Endothelial cell of umbilical vein (primary cell): ENCODE measurements at regions of chr1 and their contacts with region 1.

Region 1: GRCh38 chr1:234610348-234611152 is 572 bp upstream of the IRF2BP2 start:
- DNase-seq: peak; percentile 95
- H3K4me3 ChIP-seq: peak overlapping the region; percentile 17 to 78 (median 57)
- H3K27ac ChIP-seq: peak overlapping the region; percentile 99
- H3K4me1 ChIP-seq: peaks cover 37% of the 10 kb centered on the region
- H3K27me3 ChIP-seq: no peaks in the 10 kb centered on the region
- CTCF ChIP-seq: peak in 1 of 2 donors; percentile 14
- POLR2A ChIP-seq: peak; percentile 10

Region 2: DNA sequence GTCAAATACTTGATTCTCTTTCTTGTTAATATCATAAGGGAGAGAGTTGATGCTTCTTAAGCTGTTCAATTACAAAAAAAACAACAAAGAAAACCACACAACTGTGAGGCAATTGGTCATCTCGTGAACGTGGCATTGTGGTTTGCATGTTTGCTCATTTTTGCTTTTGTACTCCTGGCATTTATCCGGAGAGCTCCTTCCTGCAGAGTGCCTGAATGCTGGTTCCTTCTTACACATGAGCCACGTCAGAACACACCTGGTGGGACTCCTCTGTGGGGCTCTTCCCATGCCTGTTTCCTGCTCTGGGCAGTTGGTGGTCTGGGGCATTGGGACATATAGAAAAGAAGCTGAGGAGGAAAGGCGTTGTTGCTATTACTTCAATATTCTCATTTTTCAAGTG is 970.9 kb before region 1 on chr1:
- CTCF ChIA-PET with region 1: no interaction called
- POLR2A ChIA-PET with region 1: no interaction called
- dilution Hi-C with region 1: no loop called
- intact Hi-C with region 1: no loop called
- DNase-seq: no peak
- H3K4me3 ChIP-seq: no peak overlapping the region
- H3K27ac ChIP-seq: no peak overlapping the region
- H3K4me1 ChIP-seq: no peaks in the 10 kb centered on the region
- H3K27me3 ChIP-seq: no peaks in the 10 kb centered on the region
- CTCF ChIP-seq: no peak
- POLR2A ChIP-seq: no peak

Region 3: DNA sequence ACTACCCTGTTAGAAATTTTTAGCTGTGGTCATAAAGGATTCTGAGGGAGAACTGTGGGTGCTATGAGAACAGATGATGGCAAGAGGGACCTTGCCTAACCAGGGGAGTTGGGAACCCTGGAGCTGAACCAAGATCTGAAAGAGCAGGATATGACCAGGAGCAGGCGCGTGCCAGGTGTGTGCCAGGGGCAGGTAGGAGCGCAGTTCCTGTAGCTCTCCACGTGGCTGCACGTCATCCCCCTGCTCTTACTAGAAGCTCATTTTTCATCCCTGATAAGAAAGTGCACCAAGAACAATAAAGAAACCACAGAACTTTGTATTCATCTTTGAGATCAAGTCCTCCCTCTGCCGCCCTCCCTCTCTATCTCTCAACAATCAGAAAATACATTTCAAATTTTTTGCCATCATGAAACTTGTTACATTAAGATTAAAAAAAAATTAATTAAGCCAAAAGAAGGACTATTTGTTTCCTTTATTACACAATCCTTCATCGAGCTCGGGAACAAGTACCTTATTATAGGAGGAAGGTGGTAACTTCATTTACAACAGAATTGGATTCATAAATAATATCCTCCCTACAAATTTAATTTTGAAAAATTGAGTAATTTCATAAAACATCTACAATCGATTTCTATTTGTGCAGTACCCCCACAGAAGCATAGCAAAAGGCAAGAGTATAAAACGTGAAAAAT is 627.6 kb before region 1 on chr1:
- CTCF ChIA-PET with region 1: no interaction called
- POLR2A ChIA-PET with region 1: no interaction called
- dilution Hi-C with region 1: no loop called
- intact Hi-C with region 1: no loop called
- DNase-seq: no peak
- H3K4me3 ChIP-seq: no peak overlapping the region
- H3K27ac ChIP-seq: no peak overlapping the region
- H3K4me1 ChIP-seq: no peaks in the 10 kb centered on the region
- H3K27me3 ChIP-seq: no peaks in the 10 kb centered on the region
- CTCF ChIP-seq: no peak
- POLR2A ChIP-seq: no peak

Region 4: DNA sequence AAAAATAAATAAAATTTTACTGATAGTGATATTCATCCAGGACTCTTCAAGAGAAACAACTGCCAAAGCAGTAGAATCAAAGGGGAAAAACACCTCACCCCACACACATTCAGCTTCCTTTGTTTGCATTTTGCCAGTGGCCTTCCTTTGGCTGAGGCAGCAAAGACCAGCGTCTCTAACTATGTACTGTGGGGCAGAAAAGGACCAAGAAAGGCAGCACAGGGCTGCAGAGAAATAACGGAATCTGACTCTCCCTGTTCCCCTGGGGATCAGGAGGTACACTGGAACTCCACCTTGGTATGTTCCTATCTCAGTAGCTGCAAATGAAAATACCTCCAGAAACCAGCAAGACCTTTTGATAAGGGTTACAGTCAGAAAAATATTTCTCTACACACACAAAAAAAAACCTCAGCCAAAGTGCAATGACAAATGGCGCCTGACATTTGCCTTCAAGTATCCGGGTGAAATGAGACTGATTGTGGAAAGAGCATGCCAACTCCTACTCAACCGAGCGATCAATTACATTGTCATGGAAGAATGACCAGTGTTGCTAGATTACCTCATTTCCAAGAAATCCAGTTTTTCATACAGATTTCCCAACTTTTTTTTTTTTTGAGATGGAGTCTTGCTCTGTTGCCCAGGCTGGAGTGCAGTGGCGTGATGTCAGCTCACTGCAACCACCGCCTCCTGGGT is 182.5 kb before region 1 on chr1:
- CTCF ChIA-PET with region 1: no interaction called
- POLR2A ChIA-PET with region 1: no interaction called
- dilution Hi-C with region 1: no loop called
- intact Hi-C with region 1: no loop called
- DNase-seq: peak; percentile 31
- H3K4me3 ChIP-seq: no peak overlapping the region
- H3K27ac ChIP-seq: no peak overlapping the region
- H3K4me1 ChIP-seq: peaks cover 19% of the 10 kb centered on the region
- H3K27me3 ChIP-seq: no peaks in the 10 kb centered on the region
- CTCF ChIP-seq: no peak
- POLR2A ChIP-seq: no peak

Region 5: GRCh38 chr1:234550341-234551031 is 60.1 kb before region 1 on chr1:
- CTCF ChIA-PET with region 1: no interaction called
- POLR2A ChIA-PET with region 1: no interaction called
- dilution Hi-C with region 1: no loop called
- intact Hi-C with region 1: no loop called
- DNase-seq: peak; percentile 50
- H3K4me3 ChIP-seq: no peak overlapping the region
- H3K27ac ChIP-seq: no peak overlapping the region
- H3K4me1 ChIP-seq: peaks cover 24% of the 10 kb centered on the region
- H3K27me3 ChIP-seq: no peaks in the 10 kb centered on the region
- CTCF ChIP-seq: no peak
- POLR2A ChIP-seq: no peak

Region 6: GRCh38 chr1:234631721-234632125 is 21.2 kb after region 1 on chr1:
- CTCF ChIA-PET with region 1: interaction called, 24 read pairs
- POLR2A ChIA-PET with region 1: interaction called, 10 read pairs
- dilution Hi-C with region 1: no loop called
- intact Hi-C with region 1: loop called (anchors 1 kb)
- DNase-seq: peak; percentile 98
- H3K4me3 ChIP-seq: no peak overlapping the region
- H3K27ac ChIP-seq: peak overlapping the region; percentile 95
- H3K4me1 ChIP-seq: peaks cover 38% of the 10 kb centered on the region
- H3K27me3 ChIP-seq: no peaks in the 10 kb centered on the region
- CTCF ChIP-seq: no peak
- POLR2A ChIP-seq: no peak

Region 7: GRCh38 chr1:234743791-234744611 is 133.5 kb after region 1 on chr1:
- CTCF ChIA-PET with region 1: interaction called, 12 read pairs
- POLR2A ChIA-PET with region 1: interaction called, 4 read pairs
- dilution Hi-C with region 1: no loop called
- intact Hi-C with region 1: loop called (anchors 1 kb)
- DNase-seq: peak; percentile 99
- H3K4me3 ChIP-seq: peak overlapping the region in 1 of 3 experiments; percentile 7
- H3K27ac ChIP-seq: peak overlapping the region; percentile 88
- H3K4me1 ChIP-seq: peaks cover 36% of the 10 kb centered on the region
- H3K27me3 ChIP-seq: no peaks in the 10 kb centered on the region
- CTCF ChIP-seq: peak in 1 of 2 donors; percentile 15
- POLR2A ChIP-seq: peak; percentile 91

Region 8: DNA sequence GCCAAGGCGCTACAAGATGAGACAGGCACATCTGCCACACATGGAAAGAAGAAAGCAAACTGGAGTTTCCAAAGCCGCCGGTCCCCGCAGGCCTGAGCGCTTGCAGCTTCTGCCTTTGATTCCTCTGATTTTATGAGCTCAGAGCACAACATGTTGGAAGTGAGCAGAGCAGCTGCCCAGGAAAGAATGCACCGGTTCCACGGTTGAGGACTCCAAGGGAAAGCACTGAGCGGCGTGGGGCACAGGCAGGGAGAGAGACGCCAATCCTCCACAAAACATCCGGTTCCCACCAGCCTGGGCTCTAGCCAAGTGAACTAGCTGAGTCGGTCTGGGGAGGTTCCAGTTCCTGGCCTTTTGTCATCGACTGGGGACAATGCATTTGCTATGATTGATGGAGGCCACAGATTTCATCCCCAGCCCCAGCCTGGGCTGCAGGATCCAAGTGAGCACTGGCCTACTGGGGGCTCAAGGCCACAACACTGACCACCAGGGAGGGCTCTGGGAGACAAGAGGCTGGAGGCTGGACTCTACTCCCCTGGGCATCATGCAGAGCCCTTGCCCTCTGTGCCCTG is 252.5 kb after region 1 on chr1:
- CTCF ChIA-PET with region 1: no interaction called
- POLR2A ChIA-PET with region 1: no interaction called
- dilution Hi-C with region 1: no loop called
- intact Hi-C with region 1: loop called (anchors 2 kb)
- DNase-seq: peak; percentile 96
- H3K4me3 ChIP-seq: no peak overlapping the region
- H3K27ac ChIP-seq: peak overlapping the region; percentile 85
- H3K4me1 ChIP-seq: peaks cover 46% of the 10 kb centered on the region
- H3K27me3 ChIP-seq: no peaks in the 10 kb centered on the region
- CTCF ChIP-seq: no peak
- POLR2A ChIP-seq: no peak

Region 9: GRCh38 chr1:234962340-234962989 is 351.9 kb after region 1 on chr1:
- CTCF ChIA-PET with region 1: no interaction called
- POLR2A ChIA-PET with region 1: no interaction called
- dilution Hi-C with region 1: no loop called
- intact Hi-C with region 1: loop called (anchors 1 kb)
- DNase-seq: no peak
- H3K4me3 ChIP-seq: no peak overlapping the region
- H3K27ac ChIP-seq: peak overlapping the region; percentile 3
- H3K4me1 ChIP-seq: peaks cover 34% of the 10 kb centered on the region
- H3K27me3 ChIP-seq: no peaks in the 10 kb centered on the region
- CTCF ChIP-seq: no peak
- POLR2A ChIP-seq: no peak

Region 10: GRCh38 chr1:234987415-234988154 is 377.0 kb after region 1 on chr1:
- CTCF ChIA-PET with region 1: interaction called, 4 read pairs
- POLR2A ChIA-PET with region 1: interaction called, 4 read pairs
- dilution Hi-C with region 1: loop called (anchors 25 kb)
- intact Hi-C with region 1: loop called (anchors 1 kb)
- DNase-seq: peak; percentile 98
- H3K4me3 ChIP-seq: no peak overlapping the region
- H3K27ac ChIP-seq: peak overlapping the region; percentile 100
- H3K4me1 ChIP-seq: peaks cover 47% of the 10 kb centered on the region
- H3K27me3 ChIP-seq: no peaks in the 10 kb centered on the region
- CTCF ChIP-seq: no peak
- POLR2A ChIP-seq: no peak